Left cardiac atrium (tissue), 4 donors: ENCODE measurements at regions of chr14 and their contacts with region 1.

Region 1: GRCh38 chr14:64636208-64636979 is 67.8 kb upstream of the PLEKHG3 start:
- DNase-seq: peak; percentile 71
- ATAC-seq: peak; percentile 89 to 91

Region 2: DNA sequence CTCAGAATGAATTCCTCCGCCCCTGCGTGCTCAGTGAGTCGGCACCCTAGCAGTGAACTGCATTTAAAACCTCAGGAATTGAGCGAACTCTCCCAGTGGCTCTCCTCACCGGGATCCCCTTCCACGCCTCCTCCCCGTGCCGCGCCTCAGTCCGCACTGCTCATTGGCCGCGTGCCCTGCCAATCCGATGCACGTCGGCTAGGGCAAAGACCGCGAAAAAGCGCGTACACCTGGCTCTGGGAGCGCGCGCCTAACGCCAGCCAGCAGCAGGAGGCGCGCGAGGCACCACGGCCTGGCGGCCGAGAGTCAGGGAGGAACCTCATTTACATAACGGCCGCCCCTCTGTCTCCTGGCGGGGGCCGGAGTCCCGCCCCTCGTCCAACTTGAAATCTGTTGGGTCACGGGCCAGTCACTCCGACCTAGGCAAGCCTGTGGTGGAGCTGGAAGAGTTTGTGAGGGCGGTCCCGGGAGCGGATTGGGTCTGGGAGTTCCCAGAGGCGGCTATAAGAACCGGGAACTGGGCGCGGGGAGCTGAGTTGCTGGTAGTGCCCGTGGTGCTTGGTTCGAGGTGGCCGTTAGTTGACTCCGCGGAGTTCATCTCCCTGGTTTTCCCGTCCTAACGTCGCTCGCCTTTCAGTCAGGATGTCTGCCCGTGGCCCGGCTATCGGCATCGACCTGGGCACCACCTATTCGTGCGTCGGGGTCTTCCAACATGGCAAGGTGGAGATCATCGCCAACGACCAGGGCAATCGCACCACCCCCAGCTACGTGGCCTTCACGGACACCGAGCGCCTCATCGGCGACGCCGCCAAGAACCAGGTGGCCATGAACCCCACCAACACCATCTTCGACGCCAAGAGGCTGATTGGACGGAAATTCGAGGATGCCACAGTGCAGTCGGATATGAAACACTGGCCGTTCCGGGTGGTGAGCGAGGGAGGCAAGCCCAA is 95.9 kb before region 1 on chr14 and contains the start of gene HSPA2:
- intact Hi-C with region 1: loop called (anchors 5 to 10 kb)
- DNase-seq: peak; percentile 99
- ATAC-seq: peak; percentile 96 to 98
- total RNA-seq, gene HSPA2: 29.8 to 54.2 TPM